Transverse colon (tissue), 4 donors: ENCODE measurements at regions of chr20 and their contacts with region 1.

Region 1: GRCh38 chr20:25696384-25697131 is at the start of gene ZNF337:
- DNase-seq: peak; percentile 95
- H3K4me3 ChIP-seq: peak within 1 kb of the TSS; percentile 46 to 91 (median 86)
- H3K27ac ChIP-seq: peak within 1 kb of the TSS; percentile 79 to 93 (median 92)
- H3K4me1 ChIP-seq: peaks cover 8 to 15% (median 13%) of the 10 kb centered on the region in 4 donors
- H3K27me3 ChIP-seq: no peaks in the 10 kb centered on the region
- CTCF ChIP-seq: peak in 3 of 5 experiments; percentile 11 to 23 (median 20)
- EP300 ChIP-seq: no peak
- POLR2A ChIP-seq: peak; percentile 68
- total RNA-seq, gene ZNF337: 5.2 to 17.1 (median 11.0) TPM

Region 2: DNA sequence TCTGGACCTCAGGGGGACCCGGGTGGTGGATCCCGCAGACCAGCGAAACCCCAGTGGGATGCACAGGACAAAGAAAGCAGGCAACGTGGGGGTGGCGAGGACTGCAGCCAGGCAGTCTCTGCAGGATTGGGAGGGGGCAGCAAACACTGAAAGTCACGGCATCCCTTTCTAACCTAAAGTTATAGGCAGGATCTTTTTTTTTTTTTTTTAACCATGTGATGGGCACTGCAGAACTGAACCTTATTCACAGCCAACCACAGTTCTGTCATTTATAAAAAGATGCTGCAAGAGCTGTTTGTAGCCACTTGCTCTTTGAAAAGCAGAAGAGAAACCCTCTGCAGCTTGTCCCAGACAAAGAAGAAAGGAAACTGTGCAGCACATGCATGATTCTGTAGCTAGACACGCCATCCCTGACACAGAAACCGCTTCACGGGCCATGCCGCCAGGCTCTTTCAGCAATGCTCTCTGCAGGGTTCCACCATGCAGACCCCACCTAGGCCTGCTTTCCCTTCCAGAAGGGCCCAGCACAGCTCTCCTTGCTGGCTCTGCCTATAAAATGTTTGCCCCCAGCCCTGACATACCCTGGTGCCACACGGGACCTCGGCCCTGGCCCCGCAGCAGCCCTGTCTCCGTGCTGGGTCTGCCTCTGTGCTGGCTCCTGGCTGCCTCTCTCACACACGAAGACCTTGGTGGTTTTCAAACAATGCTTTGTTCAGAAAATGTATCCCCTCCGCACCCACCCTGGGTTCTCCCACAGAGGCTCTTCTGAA is 377.9 kb before region 1 on chr20:
- in situ Hi-C with region 1: no loop called
- intact Hi-C with region 1: no loop called
- DNase-seq: no peak
- H3K4me3 ChIP-seq: no peak overlapping the region
- H3K27ac ChIP-seq: peak overlapping the region; percentile 37 to 63 (median 44)
- H3K4me1 ChIP-seq: peaks cover 0 to 20% (median 8%) of the 10 kb centered on the region in 4 donors
- H3K27me3 ChIP-seq: no peaks in the 10 kb centered on the region
- CTCF ChIP-seq: no peak
- EP300 ChIP-seq: no peak
- POLR2A ChIP-seq: no peak

Region 3: DNA sequence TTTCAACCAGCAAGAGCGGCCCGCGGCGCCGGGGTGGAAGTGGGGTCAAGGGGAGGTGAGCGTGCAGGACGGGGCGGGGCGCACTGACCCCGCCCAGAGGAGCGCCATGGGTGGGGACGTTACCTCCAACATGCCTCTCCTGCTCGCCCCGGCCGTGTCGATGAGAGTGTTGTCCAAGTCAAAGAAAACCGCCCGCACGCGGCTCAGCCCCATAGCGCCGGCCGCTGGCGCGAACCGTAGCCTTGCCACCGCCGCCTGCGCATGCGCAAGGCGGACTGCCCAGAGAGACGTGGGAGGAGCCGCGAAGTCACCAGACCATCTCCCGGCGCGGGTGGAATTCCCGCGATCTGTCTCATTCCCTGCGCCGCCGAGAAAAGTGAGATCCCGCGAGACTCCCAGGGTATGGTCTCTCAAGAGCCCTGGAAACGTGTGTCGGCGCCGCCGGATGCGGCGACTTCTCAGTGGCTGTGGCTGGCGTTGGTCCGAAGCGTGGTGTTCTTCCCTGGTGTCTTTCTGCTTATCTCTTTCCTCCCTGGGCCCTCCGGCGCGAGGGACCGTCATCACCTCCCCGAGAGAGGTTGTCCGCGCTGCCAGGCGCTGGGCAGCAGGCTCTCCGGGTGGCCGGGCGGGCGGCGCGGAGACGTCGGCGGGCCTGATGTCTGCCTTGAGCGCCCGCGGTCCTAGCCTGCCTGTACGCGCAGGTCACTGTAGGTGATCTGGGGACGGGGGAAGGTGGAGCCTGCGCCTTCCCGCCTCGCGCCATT is 72.6 kb before region 1 on chr20 and contains the start of gene NANP:
- in situ Hi-C with region 1: loop called in 1 of 4 experiments (anchors 10 kb)
- intact Hi-C with region 1: no loop called
- DNase-seq: peak; percentile 95
- H3K4me3 ChIP-seq: peak within 1 kb of the TSS; percentile 61 to 88 (median 72)
- H3K27ac ChIP-seq: peak within 1 kb of the TSS; percentile 92 to 96 (median 94)
- H3K4me1 ChIP-seq: peaks cover 7 to 25% (median 16%) of the 10 kb centered on the region in 4 donors
- H3K27me3 ChIP-seq: no peaks in the 10 kb centered on the region
- CTCF ChIP-seq: no peak
- EP300 ChIP-seq: no peak
- POLR2A ChIP-seq: peak; percentile 73
- total RNA-seq, gene NANP: 1.4 to 7.1 (median 3.4) TPM

Region 4: DNA sequence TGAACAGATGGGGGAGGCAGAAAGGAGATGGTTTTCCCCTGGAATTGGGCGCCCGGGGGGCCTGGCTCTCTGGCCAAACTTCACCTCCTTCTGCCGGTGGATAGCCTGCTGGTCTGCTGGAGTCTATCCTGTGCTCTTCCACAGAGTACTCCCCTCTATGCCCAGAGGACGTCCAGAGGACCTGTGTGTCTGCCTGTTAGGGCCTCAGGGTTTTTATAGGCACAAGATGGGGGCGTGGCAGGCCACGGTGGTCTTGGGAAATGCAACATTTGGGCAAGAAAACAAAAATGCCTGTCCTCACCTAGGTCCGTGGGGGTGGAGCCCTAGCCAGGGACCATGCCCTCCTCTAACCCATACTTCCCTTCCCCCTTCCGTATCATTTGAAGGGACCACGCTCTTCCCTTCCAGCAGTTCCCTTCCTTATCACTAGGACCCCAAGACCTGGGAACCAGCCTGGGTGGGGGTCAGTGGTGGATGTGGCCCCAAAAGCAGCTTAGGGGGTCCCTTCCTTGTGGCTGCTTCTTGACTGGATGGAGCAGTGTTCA is 53.7 kb after region 1 on chr20:
- in situ Hi-C with region 1: no loop called
- intact Hi-C with region 1: no loop called
- DNase-seq: no peak
- H3K4me3 ChIP-seq: peak overlapping the region; percentile 16 to 53 (median 36)
- H3K27ac ChIP-seq: peak overlapping the region in 3 of 4 donors; percentile 13 to 41 (median 39)
- H3K4me1 ChIP-seq: peaks cover 0 to 4% (median 2%) of the 10 kb centered on the region in 4 donors
- H3K27me3 ChIP-seq: no peaks in the 10 kb centered on the region
- CTCF ChIP-seq: no peak
- EP300 ChIP-seq: no peak
- POLR2A ChIP-seq: no peak